ENCODE measurements at regions of chr17 and their contacts with region 1.

Region 1: GRCh38 chr17:40362696-40363110 is 1.8 kb downstream of the GJD3 start:
- DNase-seq: peak; percentile 93
- H3K4me3 Mint-ChIP-seq: peak overlapping the region; percentile 42
- H3K27ac Mint-ChIP-seq: no peak overlapping the region
- H3K4me1 Mint-ChIP-seq: peaks cover 10% of the 10 kb centered on the region
- H3K27me3 Mint-ChIP-seq: peaks cover 14% of the 10 kb centered on the region

Region 2: DNA sequence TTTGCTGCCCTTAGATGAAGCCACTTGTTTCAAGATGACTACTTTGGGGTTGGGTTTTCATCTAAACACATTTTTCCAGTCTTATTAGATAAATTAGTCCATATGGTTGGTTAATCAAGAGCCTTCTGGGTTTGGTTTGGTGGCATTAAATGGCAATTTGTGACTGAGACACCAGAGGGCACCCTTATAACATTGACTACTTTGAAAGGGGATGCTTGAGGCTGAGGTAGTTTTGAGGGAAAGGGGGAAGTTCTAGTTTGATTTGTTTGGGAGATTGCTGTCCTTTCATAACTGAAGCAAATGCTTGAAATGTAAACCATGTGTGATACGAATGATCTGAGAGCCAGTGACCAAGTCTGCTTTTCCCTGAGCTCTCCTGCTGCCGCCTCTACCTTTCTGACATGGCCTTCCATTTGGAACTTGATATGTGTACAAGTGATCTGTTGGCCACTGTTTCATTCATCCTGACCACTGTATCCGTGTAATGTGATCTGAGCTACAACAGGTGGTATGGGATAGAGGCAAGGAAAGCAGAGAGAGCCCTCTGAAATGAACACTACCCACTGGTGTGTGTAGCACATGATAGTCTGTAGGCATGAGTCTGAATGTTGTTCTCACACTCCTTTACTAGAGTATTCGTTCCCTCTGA is 59.6 kb before region 1 on chr17:
- CTCF ChIA-PET with region 1: interaction called, 241 read pairs
- POLR2A ChIA-PET with region 1: no interaction called
- intact Hi-C with region 1: no loop called
- DNase-seq: peak; percentile 46
- H3K4me3 Mint-ChIP-seq: no peak overlapping the region
- H3K27ac Mint-ChIP-seq: peak overlapping the region; percentile 36
- H3K4me1 Mint-ChIP-seq: peaks cover 15% of the 10 kb centered on the region
- H3K27me3 Mint-ChIP-seq: no peaks in the 10 kb centered on the region

Region 3: GRCh38 chr17:40309031-40309948 is 53.4 kb before region 1 on chr17 and contains the start of gene RARA:
- CTCF ChIA-PET with region 1: interaction called, 241 read pairs
- POLR2A ChIA-PET with region 1: no interaction called
- intact Hi-C with region 1: no loop called
- DNase-seq: no peak
- H3K4me3 Mint-ChIP-seq: no peak within 1 kb of the TSS
- H3K27ac Mint-ChIP-seq: no peak within 1 kb of the TSS
- H3K4me1 Mint-ChIP-seq: peaks cover 34% of the 10 kb centered on the region
- H3K27me3 Mint-ChIP-seq: no peaks in the 10 kb centered on the region
- total RNA-seq, gene RARA: 31.2 TPM

Region 4: DNA sequence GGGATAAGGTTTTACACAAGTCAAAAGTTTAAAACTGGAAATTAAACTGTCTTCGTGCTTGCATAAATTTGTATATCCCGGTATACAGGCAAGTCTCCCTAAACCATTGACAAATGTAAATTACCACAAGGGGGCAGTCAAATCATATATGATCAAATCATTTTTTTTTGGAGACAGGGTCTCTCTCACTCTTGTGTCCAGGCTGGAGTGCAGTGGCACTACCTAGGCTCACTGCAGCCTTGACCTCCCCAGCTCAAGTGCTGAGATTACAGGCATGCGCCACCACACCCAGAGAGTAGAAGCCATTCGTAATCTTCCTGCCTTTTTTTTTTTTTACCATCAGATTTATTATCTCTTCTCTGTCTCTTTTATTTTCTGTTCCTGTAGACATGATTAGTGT is 36.5 kb after region 1 on chr17:
- CTCF ChIA-PET with region 1: interaction called, 12 read pairs
- POLR2A ChIA-PET with region 1: interaction called, 3 read pairs
- intact Hi-C with region 1: loop called (anchors 5 kb)
- DNase-seq: no peak
- H3K4me3 Mint-ChIP-seq: no peak overlapping the region
- H3K27ac Mint-ChIP-seq: peak overlapping the region; percentile 54
- H3K4me1 Mint-ChIP-seq: peaks cover 18% of the 10 kb centered on the region
- H3K27me3 Mint-ChIP-seq: no peaks in the 10 kb centered on the region

Region 5: DNA sequence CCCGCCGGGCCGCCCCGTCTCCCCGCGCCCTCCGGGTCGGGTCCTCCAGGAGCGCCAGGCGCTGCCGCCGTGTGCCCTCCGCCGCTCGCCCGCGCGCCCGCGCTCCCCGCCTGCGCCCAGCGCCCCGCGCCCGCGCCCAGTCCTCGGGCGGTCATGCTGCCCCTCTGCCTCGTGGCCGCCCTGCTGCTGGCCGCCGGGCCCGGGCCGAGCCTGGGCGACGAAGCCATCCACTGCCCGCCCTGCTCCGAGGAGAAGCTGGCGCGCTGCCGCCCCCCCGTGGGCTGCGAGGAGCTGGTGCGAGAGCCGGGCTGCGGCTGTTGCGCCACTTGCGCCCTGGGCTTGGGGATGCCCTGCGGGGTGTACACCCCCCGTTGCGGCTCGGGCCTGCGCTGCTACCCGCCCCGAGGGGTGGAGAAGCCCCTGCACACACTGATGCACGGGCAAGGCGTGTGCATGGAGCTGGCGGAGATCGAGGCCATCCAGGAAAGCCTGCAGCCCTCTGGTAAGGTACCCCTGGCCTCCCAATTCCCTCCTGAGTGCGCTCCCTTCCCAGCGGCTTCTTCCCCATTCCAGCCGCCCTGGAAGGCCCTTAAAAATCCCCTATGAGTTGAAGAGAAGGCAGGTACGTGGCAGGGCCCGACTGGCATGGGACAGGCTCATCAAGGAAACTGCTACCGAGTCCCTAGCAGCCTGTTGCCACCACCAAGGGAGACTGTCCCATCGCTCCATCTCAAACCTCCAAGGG is 81.1 kb after region 1 on chr17:
- CTCF ChIA-PET with region 1: interaction called, 10 read pairs
- POLR2A ChIA-PET with region 1: no interaction called
- intact Hi-C with region 1: no loop called
- DNase-seq: peak; percentile 76
- H3K4me3 Mint-ChIP-seq: peak overlapping the region; percentile 65
- H3K27ac Mint-ChIP-seq: peak overlapping the region; percentile 82
- H3K4me1 Mint-ChIP-seq: peaks cover 41% of the 10 kb centered on the region
- H3K27me3 Mint-ChIP-seq: peaks cover 1% of the 10 kb centered on the region

Region 6: GRCh38 chr17:40450175-40450574 is 87.5 kb after region 1 on chr17:
- CTCF ChIA-PET with region 1: interaction called, 9 read pairs
- POLR2A ChIA-PET with region 1: no interaction called
- intact Hi-C with region 1: loop called (anchors 1 kb)
- DNase-seq: peak; percentile 55
- H3K4me3 Mint-ChIP-seq: no peak overlapping the region
- H3K27ac Mint-ChIP-seq: no peak overlapping the region
- H3K4me1 Mint-ChIP-seq: peaks cover 32% of the 10 kb centered on the region
- H3K27me3 Mint-ChIP-seq: no peaks in the 10 kb centered on the region

Region 7: GRCh38 chr17:40536295-40537171 is 173.8 kb after region 1 on chr17:
- CTCF ChIA-PET with region 1: interaction called, 120 read pairs
- POLR2A ChIA-PET with region 1: interaction called, 10 read pairs
- intact Hi-C with region 1: loop called (anchors 1 kb)
- DNase-seq: no peak
- H3K4me3 Mint-ChIP-seq: no peak overlapping the region
- H3K27ac Mint-ChIP-seq: no peak overlapping the region
- H3K4me1 Mint-ChIP-seq: peaks cover 81% of the 10 kb centered on the region
- H3K27me3 Mint-ChIP-seq: no peaks in the 10 kb centered on the region

Measured in activated CD4-positive, alpha-beta memory T cell treated with anti-CD3 and anti-CD28 coated beads for 36 hours (primary cell).